Naive thymus-derived CD4-positive, alpha-beta T cell (primary cell): ENCODE measurements at regions of chr17 and their contacts with region 1.

Region 1: GRCh38 chr17:34199932-34200534 is 55.1 kb upstream of the CCL2 start:
- DNase-seq: peak; percentile 23 to 76 (median 62)
- ATAC-seq: peak; percentile 93
- H3K4me3 ChIP-seq: no peak overlapping the region
- H3K4me3 Mint-ChIP-seq: no peak overlapping the region
- H3K27ac ChIP-seq: no peak overlapping the region
- H3K27ac Mint-ChIP-seq: no peak overlapping the region
- H3K4me1 ChIP-seq: no peaks in the 10 kb centered on the region
- H3K4me1 Mint-ChIP-seq: peaks cover 0 to 15% (median 0%) of the 10 kb centered on the region in 7 donors
- H3K27me3 ChIP-seq: no peaks in the 10 kb centered on the region
- H3K27me3 Mint-ChIP-seq: peaks cover 18 to 38% (median 24%) of the 10 kb centered on the region in 5 donors

Region 2: GRCh38 chr17:34171245-34171818 is 28.7 kb before region 1 on chr17:
- CTCF ChIA-PET with region 1: no interaction called
- POLR2A ChIA-PET with region 1: no interaction called
- intact Hi-C with region 1: loop called in 1 of 2 experiments (anchors 1 kb)
- DNase-seq: peak in 7 of 9 donors; percentile 12 to 48 (median 31)
- ATAC-seq: peak; percentile 81
- H3K4me3 ChIP-seq: no peak overlapping the region
- H3K4me3 Mint-ChIP-seq: no peak overlapping the region
- H3K27ac ChIP-seq: no peak overlapping the region
- H3K27ac Mint-ChIP-seq: no peak overlapping the region
- H3K4me1 ChIP-seq: no peaks in the 10 kb centered on the region
- H3K4me1 Mint-ChIP-seq: peaks cover 0 to 6% (median 0%) of the 10 kb centered on the region in 7 donors
- H3K27me3 ChIP-seq: no peaks in the 10 kb centered on the region
- H3K27me3 Mint-ChIP-seq: peaks cover 9 to 24% (median 15%) of the 10 kb centered on the region in 5 donors

Region 3: GRCh38 chr17:34361478-34362061 is 161.5 kb after region 1 on chr17:
- CTCF ChIA-PET with region 1: interaction called, 8 read pairs
- POLR2A ChIA-PET with region 1: no interaction called
- intact Hi-C with region 1: loop called in 1 of 2 experiments (anchors 1 kb)
- DNase-seq: peak; percentile 17 to 78 (median 40)
- ATAC-seq: peak; percentile 89
- H3K4me3 ChIP-seq: no peak overlapping the region
- H3K4me3 Mint-ChIP-seq: no peak overlapping the region
- H3K27ac ChIP-seq: no peak overlapping the region
- H3K27ac Mint-ChIP-seq: peak overlapping the region in 1 of 9 donors; percentile 21
- H3K4me1 ChIP-seq: no peaks in the 10 kb centered on the region
- H3K4me1 Mint-ChIP-seq: peaks cover 5 to 44% (median 8%) of the 10 kb centered on the region in 7 donors
- H3K27me3 ChIP-seq: no peaks in the 10 kb centered on the region
- H3K27me3 Mint-ChIP-seq: peaks cover 12 to 36% (median 16%) of the 10 kb centered on the region in 5 donors